ENCODE measurements at regions of chr11 and their contacts with region 1.

Region 1: DNA sequence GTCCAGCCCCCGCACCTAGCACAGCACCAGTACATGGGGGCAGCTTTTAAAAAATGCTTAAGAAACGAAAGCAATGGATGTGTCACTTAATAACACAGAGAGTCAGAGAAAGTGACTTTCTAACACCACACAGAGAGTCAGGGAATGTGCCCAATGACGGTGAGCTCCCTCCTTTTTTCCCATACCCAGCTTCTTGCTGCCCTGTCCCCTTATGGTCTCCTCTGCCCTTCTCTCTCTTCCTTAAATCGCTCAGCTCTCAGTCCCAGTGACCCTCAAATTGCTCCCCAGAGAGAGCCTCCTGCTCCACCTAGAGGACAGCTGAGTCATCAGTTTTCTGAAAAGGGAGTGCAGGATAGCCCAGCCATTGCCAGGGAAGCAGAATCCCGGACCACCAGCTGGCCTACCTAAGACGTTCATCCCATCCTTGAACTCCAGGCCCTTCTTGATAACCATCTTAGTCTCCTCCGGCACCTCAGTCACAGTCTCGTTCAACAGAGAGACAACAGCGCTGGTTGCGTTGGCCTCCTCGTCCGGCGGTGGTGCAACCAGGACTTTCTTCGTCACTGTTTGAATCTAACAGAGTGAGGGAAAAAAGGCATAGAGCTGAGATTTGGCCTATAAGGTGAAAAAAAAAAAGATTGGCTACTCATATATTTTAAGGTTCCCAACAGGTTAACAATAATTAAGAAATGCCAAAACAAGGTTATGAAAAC is 113.5 kb downstream of the SLC1A2 start:
- DNase-seq: peak; percentile 65
- ATAC-seq: peak; percentile 96
- H3K4me3 Mint-ChIP-seq: no peak overlapping the region
- H3K27ac Mint-ChIP-seq: no peak overlapping the region
- H3K4me1 Mint-ChIP-seq: peaks cover 6% of the 10 kb centered on the region
- H3K27me3 Mint-ChIP-seq: no peaks in the 10 kb centered on the region
- CTCF ChIP-seq: peak; percentile 25; the same call in 1 of the 2 replicates

Region 2: DNA sequence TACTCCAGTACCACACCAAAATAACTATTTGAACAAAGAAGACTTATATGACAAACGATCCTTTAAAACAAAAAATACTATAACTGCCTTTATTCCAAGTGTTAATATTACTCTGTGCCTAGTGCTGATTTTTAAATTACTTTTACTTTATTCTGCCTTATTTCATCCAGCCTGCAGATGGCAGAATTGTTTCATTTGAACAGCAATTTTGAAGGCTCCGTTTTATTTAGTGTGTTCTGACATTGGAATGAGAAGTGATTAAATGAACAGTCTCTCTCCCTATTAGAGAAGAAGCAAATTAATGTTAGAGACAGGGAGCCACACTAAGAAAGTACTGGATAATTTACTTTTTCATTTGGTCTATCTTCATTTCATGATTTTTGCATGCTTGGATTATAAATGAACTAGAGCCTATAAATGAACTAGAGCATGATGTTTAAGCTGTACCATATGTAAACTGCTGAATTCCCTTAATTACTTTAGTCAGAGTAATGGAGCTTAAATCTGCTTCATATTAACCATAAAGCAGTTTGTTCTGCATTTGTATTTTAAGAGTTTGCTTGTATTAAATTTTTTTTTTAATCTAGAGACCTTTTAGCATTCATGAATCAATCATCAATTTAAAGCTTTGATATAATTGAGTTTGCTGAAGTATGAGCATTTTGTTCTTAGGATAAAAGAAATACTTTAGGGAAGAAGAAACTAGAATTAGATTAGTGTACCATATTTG is 379.6 kb before region 1 on chr11:
- CTCF ChIA-PET with region 1: interaction called, 17 read pairs
- POLR2A ChIA-PET with region 1: interaction called, 5 read pairs
- DNase-seq: no peak
- ATAC-seq: no peak; the same call in 1 of the 2 replicates
- H3K4me3 Mint-ChIP-seq: no peak overlapping the region
- H3K27ac Mint-ChIP-seq: no peak overlapping the region
- H3K4me1 Mint-ChIP-seq: peaks cover 26% of the 10 kb centered on the region
- H3K27me3 Mint-ChIP-seq: no peaks in the 10 kb centered on the region
- CTCF ChIP-seq: 0 out of 2 replicates have a peak, but pooled peaks have one; percentile 17

Region 3: GRCh38 chr11:34999453-34999852 is 306.4 kb before region 1 on chr11:
- CTCF ChIA-PET with region 1: interaction called, 10 read pairs
- POLR2A ChIA-PET with region 1: no interaction called
- DNase-seq: no peak
- ATAC-seq: no peak
- H3K4me3 Mint-ChIP-seq: no peak overlapping the region
- H3K27ac Mint-ChIP-seq: no peak overlapping the region
- H3K4me1 Mint-ChIP-seq: no peaks in the 10 kb centered on the region
- H3K27me3 Mint-ChIP-seq: no peaks in the 10 kb centered on the region
- CTCF ChIP-seq: no peak

Region 4: GRCh38 chr11:35237860-35238715 is 67.7 kb before region 1 on chr11:
- CTCF ChIA-PET with region 1: interaction called, 12 read pairs
- POLR2A ChIA-PET with region 1: interaction called, 3 read pairs
- DNase-seq: peak; percentile 66
- ATAC-seq: peak; percentile 96
- H3K4me3 Mint-ChIP-seq: peak overlapping the region; percentile 51
- H3K27ac Mint-ChIP-seq: no peak overlapping the region
- H3K4me1 Mint-ChIP-seq: peaks cover 16% of the 10 kb centered on the region
- H3K27me3 Mint-ChIP-seq: no peaks in the 10 kb centered on the region; the same call in 1 of the 2 replicates
- CTCF ChIP-seq: peak; percentile 73

Region 5: GRCh38 chr11:35257281-35257680 is 48.5 kb before region 1 on chr11:
- CTCF ChIA-PET with region 1: no interaction called
- POLR2A ChIA-PET with region 1: no interaction called
- DNase-seq: no peak
- ATAC-seq: no peak
- H3K4me3 Mint-ChIP-seq: no peak overlapping the region
- H3K27ac Mint-ChIP-seq: no peak overlapping the region
- H3K4me1 Mint-ChIP-seq: no peaks in the 10 kb centered on the region
- H3K27me3 Mint-ChIP-seq: no peaks in the 10 kb centered on the region
- CTCF ChIP-seq: no peak

Region 6: DNA sequence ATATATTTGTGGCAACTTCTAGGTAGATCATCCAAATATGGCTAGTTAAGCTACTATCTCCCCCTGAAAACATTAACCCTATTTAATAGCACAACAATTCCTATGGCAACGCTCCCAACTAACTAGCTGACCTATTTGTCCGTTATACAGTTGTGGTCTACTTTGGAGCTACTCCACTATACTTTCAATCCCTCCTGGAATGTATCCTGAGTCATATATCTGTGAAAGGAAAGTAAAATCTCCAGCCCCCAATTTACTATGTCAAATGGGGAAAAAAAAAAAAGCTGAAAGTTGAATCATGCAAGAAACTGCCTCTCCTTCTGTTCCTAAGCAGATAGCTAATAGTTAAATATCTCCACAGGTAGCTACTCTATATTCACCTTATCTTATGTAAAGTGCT is 38.3 kb before region 1 on chr11:
- CTCF ChIA-PET with region 1: interaction called, 10 read pairs
- POLR2A ChIA-PET with region 1: no interaction called
- DNase-seq: no peak
- ATAC-seq: no peak
- H3K4me3 Mint-ChIP-seq: no peak overlapping the region
- H3K27ac Mint-ChIP-seq: no peak overlapping the region
- H3K4me1 Mint-ChIP-seq: no peaks in the 10 kb centered on the region
- H3K27me3 Mint-ChIP-seq: no peaks in the 10 kb centered on the region; the same call in 1 of the 2 replicates
- CTCF ChIP-seq: no peak